BJ (cell line): ENCODE measurements at regions of chr10 and their contacts with region 1.

Region 1: DNA sequence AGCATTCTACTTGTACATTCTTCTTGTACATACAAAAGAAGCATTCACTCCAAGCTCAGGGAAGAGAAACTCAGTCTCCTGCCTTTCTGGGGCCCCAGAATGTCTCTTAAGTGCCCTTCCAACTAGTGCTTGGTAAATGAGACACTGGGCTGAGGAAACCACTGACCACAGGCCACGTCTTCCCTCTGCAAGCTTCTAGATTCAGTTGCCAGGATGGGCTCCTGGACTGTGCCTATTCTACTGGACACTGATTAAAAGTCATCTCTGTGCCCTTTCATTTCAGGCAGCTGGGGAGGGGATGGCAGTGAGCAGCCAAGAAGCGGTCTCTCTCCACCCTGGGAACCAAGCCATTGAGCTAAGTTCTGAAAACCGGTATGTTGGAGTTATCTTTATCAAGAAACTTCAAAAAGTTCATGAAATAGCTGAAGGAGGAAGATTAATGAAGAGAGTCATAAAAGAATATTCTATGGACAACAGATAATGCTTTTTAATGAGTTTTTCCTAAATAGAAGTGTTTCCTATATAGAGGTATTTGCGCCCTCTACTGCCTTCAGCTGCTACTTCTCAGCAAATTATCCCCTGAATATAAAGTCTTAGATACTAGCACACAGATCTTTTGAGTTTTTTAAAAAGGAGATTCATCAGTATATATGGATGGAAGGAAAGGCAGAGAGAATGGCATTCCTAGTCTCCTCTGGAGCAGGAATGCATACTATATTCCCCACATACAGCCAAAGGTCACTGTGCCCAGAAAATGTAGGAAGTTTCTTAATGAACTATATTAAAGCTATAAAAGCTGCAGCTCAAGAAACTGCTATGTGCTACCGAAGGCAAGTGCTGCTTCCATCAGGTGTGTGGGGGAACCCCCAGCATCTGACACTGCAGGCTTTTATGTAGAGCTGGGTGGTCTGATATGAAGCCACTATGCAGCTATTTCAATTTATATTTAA is 8.4 kb upstream of the IFIT1B start:
- DNase-seq: no peak
- H3K4me3 ChIP-seq: no peak overlapping the region
- H3K27me3 ChIP-seq: no peaks in the 10 kb centered on the region
- CTCF ChIP-seq: peak; percentile 58

Region 2: GRCh38 chr10:88901206-88901983 is 468.0 kb before region 1 on chr10:
- CTCF ChIA-PET with region 1: no interaction called
- POLR2A ChIA-PET with region 1: no interaction called
- DNase-seq: no peak
- H3K4me3 ChIP-seq: no peak overlapping the region
- H3K27me3 ChIP-seq: no peaks in the 10 kb centered on the region
- CTCF ChIP-seq: no peak

Region 3: GRCh38 chr10:89163265-89163995 is 206.0 kb before region 1 on chr10:
- CTCF ChIA-PET with region 1: no interaction called
- POLR2A ChIA-PET with region 1: no interaction called
- DNase-seq: no peak
- H3K4me3 ChIP-seq: no peak overlapping the region
- H3K27me3 ChIP-seq: 0 out of 2 replicates have a peak, but pooled peaks cover 2% of the 10 kb centered on the region
- CTCF ChIP-seq: no peak

Region 4: DNA sequence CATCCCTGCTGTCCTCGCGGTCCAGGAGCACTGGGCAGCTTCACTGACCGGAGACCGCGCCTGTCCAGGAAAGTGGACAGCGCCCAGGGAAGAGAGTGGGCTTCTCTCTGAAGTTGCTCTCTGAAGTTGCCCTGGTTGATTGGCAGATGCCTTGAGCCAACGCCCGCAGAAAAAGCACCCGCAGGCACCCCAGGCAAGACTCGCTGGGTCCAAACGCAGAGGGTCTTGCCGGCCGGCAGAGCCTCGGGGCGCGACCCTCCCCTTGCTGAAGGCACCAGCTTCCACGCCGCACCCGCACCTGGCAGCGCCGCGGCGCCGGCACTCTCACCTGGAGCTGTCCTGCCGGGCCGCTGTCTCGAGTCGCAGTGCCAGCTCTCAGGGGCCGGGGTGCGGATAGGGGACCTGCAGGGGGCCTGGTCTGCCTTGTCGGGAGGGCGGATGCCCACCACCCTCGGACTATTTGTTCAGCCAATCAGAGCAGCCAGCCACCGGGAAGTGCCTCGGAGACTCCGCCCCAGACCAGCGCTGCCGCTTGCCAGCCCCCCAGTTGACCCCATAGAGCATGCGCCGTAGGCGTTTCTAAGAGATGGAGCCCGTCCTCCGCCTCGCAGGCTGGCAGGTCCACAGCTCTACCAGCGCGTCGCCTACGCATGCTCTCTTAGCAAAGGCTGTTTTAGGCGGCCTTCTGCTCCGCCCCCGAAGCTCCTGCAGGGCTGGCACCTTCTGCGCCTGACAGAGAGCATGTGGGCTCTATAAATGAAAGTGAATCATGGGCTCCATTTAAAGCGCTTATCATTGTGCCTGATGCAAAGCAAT is 117.8 kb before region 1 on chr10 and contains the start of gene LIPA:
- CTCF ChIA-PET with region 1: interaction called, 14 read pairs
- POLR2A ChIA-PET with region 1: no interaction called
- DNase-seq: peak; percentile 90
- H3K4me3 ChIP-seq: peak within 1 kb of the TSS; percentile 92
- H3K27me3 ChIP-seq: no peaks in the 10 kb centered on the region
- CTCF ChIP-seq: no peak
- polyA plus RNA-seq, gene LIPA: 80.3 and 145 TPM in 2 replicates

Region 5: DNA sequence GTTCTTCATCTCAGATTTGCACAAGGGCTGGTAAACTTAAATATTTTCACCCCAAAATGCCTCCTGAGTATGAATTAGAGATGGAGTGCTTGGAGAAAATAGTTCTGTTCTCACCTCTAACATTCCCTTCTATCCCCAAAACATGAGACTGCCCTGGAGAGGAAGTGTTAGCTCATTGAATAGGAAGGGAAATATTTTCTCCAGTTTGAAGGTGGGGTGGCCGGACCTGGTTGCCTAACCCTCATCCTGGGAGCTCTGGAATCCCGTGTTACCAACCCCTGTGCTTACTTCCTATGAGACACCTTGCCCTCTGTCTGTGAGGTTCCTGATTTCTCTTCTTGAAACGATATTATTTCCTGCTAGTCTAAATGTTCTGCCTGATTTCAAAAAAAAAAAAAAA is 66.8 kb before region 1 on chr10:
- CTCF ChIA-PET with region 1: interaction called, 12 read pairs
- POLR2A ChIA-PET with region 1: interaction called, 3 read pairs
- DNase-seq: no peak
- H3K4me3 ChIP-seq: peak overlapping the region; percentile 26
- H3K27me3 ChIP-seq: no peaks in the 10 kb centered on the region
- CTCF ChIP-seq: no peak

Region 6: GRCh38 chr10:89332123-89332633 is 37.3 kb before region 1 on chr10:
- CTCF ChIA-PET with region 1: interaction called, 10 read pairs
- POLR2A ChIA-PET with region 1: interaction called, 3 read pairs
- DNase-seq: peak; percentile 87
- H3K4me3 ChIP-seq: peak overlapping the region; percentile 28
- H3K27me3 ChIP-seq: no peaks in the 10 kb centered on the region
- CTCF ChIP-seq: no peak

Region 7: DNA sequence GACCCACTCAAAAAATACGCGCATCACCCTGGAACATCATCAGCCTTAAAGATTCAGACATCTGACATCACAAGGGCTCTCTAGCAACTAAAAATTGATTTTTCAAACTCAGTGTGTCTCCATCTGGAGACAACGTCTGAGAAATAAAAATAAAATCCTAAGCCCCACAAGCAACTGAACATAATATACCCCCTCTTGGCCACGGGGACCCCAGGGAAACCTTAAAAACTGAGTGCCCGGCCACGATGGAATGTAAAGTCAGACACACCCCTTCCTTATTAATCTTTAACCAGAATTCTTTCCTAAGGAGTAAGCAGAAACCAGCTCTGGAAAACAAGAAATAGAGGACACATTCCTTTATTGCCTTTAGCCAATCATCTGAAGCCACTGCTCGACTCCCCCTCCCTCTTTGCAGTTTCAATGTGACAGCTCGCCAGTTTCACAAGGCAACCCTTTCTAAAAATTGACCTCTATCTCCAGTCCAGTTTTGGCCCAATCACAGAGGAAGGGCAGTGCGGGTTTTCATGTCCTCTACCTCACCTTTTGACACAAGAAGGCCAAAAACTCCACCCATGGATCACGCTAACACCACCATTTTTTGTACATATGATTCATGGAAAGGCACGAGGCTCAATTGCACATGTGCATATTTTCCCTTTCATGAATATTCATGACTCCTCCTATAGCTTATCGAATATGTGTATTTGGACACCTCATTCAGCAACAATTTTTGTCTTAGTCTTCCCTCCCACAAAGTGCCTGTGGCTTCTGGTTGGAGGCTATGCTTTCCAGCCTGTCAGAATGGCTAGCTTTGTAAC is 17.4 kb before region 1 on chr10:
- CTCF ChIA-PET with region 1: interaction called, 30 read pairs
- POLR2A ChIA-PET with region 1: no interaction called
- DNase-seq: peak; percentile 99
- H3K4me3 ChIP-seq: no peak overlapping the region
- H3K27me3 ChIP-seq: no peaks in the 10 kb centered on the region
- CTCF ChIP-seq: no peak